ENCODE measurements at regions of chr3 and their contacts with region 1.

Region 1: DNA sequence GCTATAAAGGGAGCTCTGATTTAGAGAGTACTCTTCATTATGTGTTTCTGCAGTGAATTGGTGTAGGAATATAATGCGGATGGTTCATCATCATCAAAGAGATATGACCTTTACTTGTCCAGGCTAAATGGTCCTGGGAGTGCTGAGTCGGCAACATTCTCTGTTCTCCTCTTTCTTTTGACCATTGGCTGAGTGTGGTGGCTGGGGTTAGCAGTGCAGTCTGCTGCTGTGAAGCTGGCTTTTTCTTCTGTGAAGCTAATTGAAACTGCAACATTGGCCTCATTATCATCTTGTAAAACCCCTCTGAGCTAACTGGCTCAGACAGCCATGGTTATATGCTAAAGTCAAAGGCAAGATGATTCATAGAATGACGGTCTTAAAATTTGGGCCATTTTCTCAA is 83.8 kb downstream of the THRB start:
- DNase-seq: no peak
- H3K4me3 ChIP-seq: no peak overlapping the region
- H3K27ac ChIP-seq: no peak overlapping the region
- H3K4me1 ChIP-seq: no peaks in the 10 kb centered on the region
- H3K27me3 ChIP-seq: no peaks in the 10 kb centered on the region
- CTCF ChIP-seq: no peak
- POLR2A ChIP-seq: no peak

Region 2: DNA sequence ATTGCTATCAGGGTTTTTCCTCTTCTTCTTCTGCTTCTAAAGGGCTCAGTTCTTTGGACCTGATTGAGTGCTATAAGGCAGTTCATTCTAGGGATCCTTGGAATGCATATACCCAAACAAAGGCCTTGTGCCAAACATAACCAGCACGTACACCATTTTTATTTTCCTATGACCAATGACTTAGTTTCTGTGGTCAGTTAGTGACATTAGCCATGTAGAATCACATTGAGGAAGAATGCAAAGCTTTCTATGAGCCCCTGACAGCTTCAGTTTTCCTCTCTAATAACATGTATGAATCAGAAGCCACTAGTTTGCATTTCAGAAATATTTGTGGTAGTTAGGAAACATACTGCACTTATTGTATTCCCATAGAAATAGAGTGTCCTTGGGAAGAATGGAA is 156.2 kb before region 1 on chr3:
- CTCF ChIA-PET with region 1: no interaction called
- POLR2A ChIA-PET with region 1: no interaction called
- dilution Hi-C with region 1: no loop called
- intact Hi-C with region 1: no loop called
- DNase-seq: no peak
- H3K4me3 ChIP-seq: no peak overlapping the region
- H3K27ac ChIP-seq: no peak overlapping the region
- H3K4me1 ChIP-seq: no peaks in the 10 kb centered on the region
- H3K27me3 ChIP-seq: no peaks in the 10 kb centered on the region
- CTCF ChIP-seq: no peak
- POLR2A ChIP-seq: no peak

Region 3: DNA sequence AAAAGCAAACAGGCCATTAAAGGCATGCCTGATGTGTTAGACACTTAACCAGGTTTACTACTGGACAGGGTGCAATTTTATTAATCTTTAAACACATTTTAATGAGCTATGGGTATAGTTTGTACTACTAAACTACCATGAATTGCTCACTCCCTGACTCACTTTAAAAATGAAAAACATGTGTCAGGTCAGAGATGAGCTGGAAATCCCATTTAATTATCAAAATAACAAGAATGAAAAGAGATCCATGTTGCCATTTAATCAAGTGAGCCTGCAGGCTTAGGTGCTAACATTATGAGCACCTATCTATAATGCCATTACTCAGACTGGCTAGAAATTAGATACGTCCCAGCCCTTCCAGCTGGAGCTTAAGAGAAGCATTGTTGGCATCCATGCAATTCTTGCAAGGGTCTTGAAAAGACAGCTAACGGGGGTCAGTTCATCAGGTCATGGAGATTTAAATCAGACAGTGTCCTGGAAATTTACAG is 140.6 kb before region 1 on chr3:
- CTCF ChIA-PET with region 1: no interaction called
- POLR2A ChIA-PET with region 1: no interaction called
- dilution Hi-C with region 1: no loop called
- intact Hi-C with region 1: loop called (anchors 1 kb)
- DNase-seq: no peak
- H3K4me3 ChIP-seq: no peak overlapping the region
- H3K27ac ChIP-seq: no peak overlapping the region
- H3K4me1 ChIP-seq: no peaks in the 10 kb centered on the region
- H3K27me3 ChIP-seq: no peaks in the 10 kb centered on the region
- CTCF ChIP-seq: no peak
- POLR2A ChIP-seq: no peak

Region 4: DNA sequence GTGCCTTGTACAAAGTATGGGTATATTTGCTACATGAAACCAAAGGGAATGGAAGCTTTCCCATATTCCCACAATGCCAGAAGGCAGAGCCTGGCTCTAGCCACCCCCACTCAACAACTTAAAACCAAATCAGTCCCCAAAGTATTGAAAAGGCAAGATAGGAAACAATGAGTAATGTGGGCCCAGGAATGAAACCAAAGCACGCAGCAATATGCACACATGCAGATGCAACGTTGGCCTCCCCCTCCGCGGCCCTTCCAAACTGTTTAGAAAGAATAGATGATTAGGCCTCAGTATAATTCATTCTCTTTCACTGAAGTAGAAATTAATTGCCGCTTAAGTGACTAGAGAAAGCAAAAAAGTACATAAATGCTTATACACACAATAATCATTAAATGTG is 24.7 kb after region 1 on chr3:
- CTCF ChIA-PET with region 1: no interaction called
- POLR2A ChIA-PET with region 1: no interaction called
- dilution Hi-C with region 1: no loop called
- intact Hi-C with region 1: no loop called
- DNase-seq: no peak
- H3K4me3 ChIP-seq: no peak overlapping the region
- H3K27ac ChIP-seq: no peak overlapping the region
- H3K4me1 ChIP-seq: no peaks in the 10 kb centered on the region
- H3K27me3 ChIP-seq: no peaks in the 10 kb centered on the region
- CTCF ChIP-seq: no peak
- POLR2A ChIP-seq: no peak

Region 5: GRCh38 chr3:24494618-24495325 is 83.9 kb after region 1 on chr3 and contains the start of gene THRB:
- CTCF ChIA-PET with region 1: no interaction called
- POLR2A ChIA-PET with region 1: no interaction called
- dilution Hi-C with region 1: no loop called
- intact Hi-C with region 1: no loop called
- DNase-seq: peak; percentile 48
- H3K4me3 ChIP-seq: peak within 1 kb of the TSS; percentile 37 to 67 (median 56)
- H3K27ac ChIP-seq: no peak within 1 kb of the TSS
- H3K4me1 ChIP-seq: peaks cover 12% of the 10 kb centered on the region
- H3K27me3 ChIP-seq: peaks cover 25 to 32% of the 10 kb centered on the region in 2 experiments
- CTCF ChIP-seq: peak in 1 of 2 donors; percentile 26
- POLR2A ChIP-seq: no peak
- total RNA-seq, gene THRB: 0.18 TPM in 1 of 2 replicates, not detected in the other

Region 6: GRCh38 chr3:25246913-25247312 is 836.1 kb after region 1 on chr3:
- CTCF ChIA-PET with region 1: no interaction called
- POLR2A ChIA-PET with region 1: no interaction called
- dilution Hi-C with region 1: no loop called
- intact Hi-C with region 1: no loop called
- DNase-seq: no peak
- H3K4me3 ChIP-seq: no peak overlapping the region
- H3K27ac ChIP-seq: no peak overlapping the region
- H3K4me1 ChIP-seq: no peaks in the 10 kb centered on the region
- H3K27me3 ChIP-seq: no peaks in the 10 kb centered on the region
- CTCF ChIP-seq: no peak
- POLR2A ChIP-seq: no peak

Measured in endothelial cell of umbilical vein (primary cell).